Spleen (tissue), 13 donors: ENCODE measurements at regions of chr18 and their contacts with region 1.

Region 1: GRCh38 chr18:43571078-43571689 is 293.9 kb upstream of the SYT4 start:
- DNase-seq: no peak
- H3K4me3 ChIP-seq: no peak overlapping the region
- H3K27ac ChIP-seq: no peak overlapping the region
- H3K4me1 ChIP-seq: no peaks in the 10 kb centered on the region
- H3K27me3 ChIP-seq: no peaks in the 10 kb centered on the region
- CTCF ChIP-seq: peak in 10 of 11 experiments; percentile 24 to 68 (median 62)
- POLR2A ChIP-seq: no peak

Region 2: GRCh38 chr18:42298759-42299675 is 1272.2 kb before region 1 on chr18:
- intact Hi-C with region 1: loop called (anchors 10 kb)
- DNase-seq: peak; percentile 78
- H3K4me3 ChIP-seq: no peak overlapping the region
- H3K27ac ChIP-seq: no peak overlapping the region
- H3K4me1 ChIP-seq: peaks cover 0 to 4% (median 0%) of the 10 kb centered on the region in 6 donors
- H3K27me3 ChIP-seq: peaks cover 0 to 3% (median 0%) of the 10 kb centered on the region in 7 donors
- CTCF ChIP-seq: peak in 10 of 11 experiments; percentile 24 to 90 (median 80)
- POLR2A ChIP-seq: no peak

Region 3: GRCh38 chr18:44013871-44014270 is 442.7 kb after region 1 on chr18:
- intact Hi-C with region 1: no loop called
- DNase-seq: no peak
- H3K4me3 ChIP-seq: no peak overlapping the region
- H3K27ac ChIP-seq: no peak overlapping the region
- H3K4me1 ChIP-seq: no peaks in the 10 kb centered on the region
- H3K27me3 ChIP-seq: no peaks in the 10 kb centered on the region
- CTCF ChIP-seq: no peak
- POLR2A ChIP-seq: no peak